ENCODE measurements at regions of chr12 and their contacts with region 1.

Region 1: DNA sequence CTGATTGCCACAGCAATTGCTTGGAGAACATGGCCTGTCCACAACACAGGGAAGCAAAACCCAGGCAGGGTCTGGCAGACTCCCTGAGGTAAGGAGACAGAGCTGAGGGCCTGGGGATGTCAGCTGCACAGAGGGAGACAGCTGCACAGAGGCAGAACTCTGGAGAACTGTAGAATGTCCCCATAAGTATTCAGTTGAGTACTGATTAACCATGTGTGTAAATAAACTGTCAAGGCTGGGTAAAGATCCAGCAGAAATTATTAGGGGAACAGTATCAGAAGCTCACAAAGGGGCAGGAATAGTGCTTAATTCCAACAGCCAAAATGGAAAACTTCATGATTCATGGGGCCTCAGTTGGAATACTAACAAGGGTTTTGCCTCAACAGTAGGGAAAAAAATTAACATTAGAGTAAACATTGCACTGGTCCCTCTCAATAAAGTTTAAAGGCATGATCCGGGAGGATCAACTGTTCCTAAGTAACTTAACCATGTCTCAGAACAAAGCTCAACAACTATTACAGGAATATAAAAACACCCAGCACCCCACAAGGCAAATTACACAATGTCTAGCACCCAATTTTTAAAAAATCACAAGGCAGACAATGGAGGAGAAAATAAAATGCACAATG is 201.3 kb upstream of the RASSF8 start:
- DNase-seq: peak; percentile 57 to 70
- H3K4me3 ChIP-seq: no peak overlapping the region
- H3K4me3 Mint-ChIP-seq: peak overlapping the region; percentile 24
- H3K27ac Mint-ChIP-seq: peak overlapping the region; percentile 36
- H3K4me1 ChIP-seq: peaks cover 29% of the 10 kb centered on the region
- H3K4me1 Mint-ChIP-seq: peaks cover 39% of the 10 kb centered on the region
- H3K27me3 ChIP-seq: no peaks in the 10 kb centered on the region
- H3K27me3 Mint-ChIP-seq: no peaks in the 10 kb centered on the region
- CTCF ChIP-seq: no peak

Region 2: DNA sequence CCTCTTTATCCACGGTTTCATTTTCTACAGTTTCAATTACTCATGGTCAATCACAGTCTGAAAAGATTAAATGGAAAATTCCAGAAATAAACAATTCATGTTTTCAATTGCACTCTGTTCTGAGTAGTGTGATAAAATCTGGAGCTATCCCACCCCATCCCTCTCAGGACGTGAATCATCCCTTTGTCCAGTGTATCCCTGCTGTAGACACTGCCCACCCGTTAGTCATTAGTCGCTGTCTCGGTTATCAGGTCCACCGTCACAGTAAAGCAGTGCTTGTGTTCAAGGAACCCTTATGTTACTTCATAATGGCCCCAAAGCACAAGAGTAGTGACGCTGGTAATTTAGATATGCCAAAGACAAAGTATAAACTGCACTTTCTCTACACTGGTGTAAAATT is 63.1 kb before region 1 on chr12:
- CTCF ChIA-PET with region 1: no interaction called
- POLR2A ChIA-PET with region 1: no interaction called
- intact Hi-C with region 1: no loop called
- DNase-seq: no peak
- H3K4me3 ChIP-seq: no peak overlapping the region
- H3K4me3 Mint-ChIP-seq: no peak overlapping the region
- H3K27ac Mint-ChIP-seq: no peak overlapping the region
- H3K4me1 ChIP-seq: peaks cover 15% of the 10 kb centered on the region
- H3K4me1 Mint-ChIP-seq: peaks cover 5% of the 10 kb centered on the region
- H3K27me3 ChIP-seq: no peaks in the 10 kb centered on the region
- H3K27me3 Mint-ChIP-seq: no peaks in the 10 kb centered on the region
- CTCF ChIP-seq: no peak

Region 3: GRCh38 chr12:25783566-25783965 is 26.4 kb after region 1 on chr12:
- CTCF ChIA-PET with region 1: no interaction called
- POLR2A ChIA-PET with region 1: no interaction called
- intact Hi-C with region 1: loop called (anchors 2 kb)
- DNase-seq: peak; percentile 56 to 66
- H3K4me3 ChIP-seq: no peak overlapping the region
- H3K4me3 Mint-ChIP-seq: peak overlapping the region; percentile 1
- H3K27ac Mint-ChIP-seq: peak overlapping the region; percentile 1
- H3K4me1 ChIP-seq: peaks cover 17% of the 10 kb centered on the region
- H3K4me1 Mint-ChIP-seq: peaks cover 23% of the 10 kb centered on the region
- H3K27me3 ChIP-seq: no peaks in the 10 kb centered on the region
- H3K27me3 Mint-ChIP-seq: no peaks in the 10 kb centered on the region
- CTCF ChIP-seq: no peak

Region 4: GRCh38 chr12:25813826-25814225 is 56.7 kb after region 1 on chr12:
- CTCF ChIA-PET with region 1: no interaction called
- POLR2A ChIA-PET with region 1: no interaction called
- intact Hi-C with region 1: loop called (anchors 2 kb)
- DNase-seq: no peak
- H3K4me3 ChIP-seq: no peak overlapping the region
- H3K4me3 Mint-ChIP-seq: no peak overlapping the region
- H3K27ac Mint-ChIP-seq: no peak overlapping the region
- H3K4me1 ChIP-seq: no peaks in the 10 kb centered on the region
- H3K4me1 Mint-ChIP-seq: no peaks in the 10 kb centered on the region
- H3K27me3 ChIP-seq: no peaks in the 10 kb centered on the region
- H3K27me3 Mint-ChIP-seq: no peaks in the 10 kb centered on the region
- CTCF ChIP-seq: no peak